CD8-positive, alpha-beta T cell (primary cell): ENCODE measurements at regions of chr14 and their contacts with region 1.

Region 1: DNA sequence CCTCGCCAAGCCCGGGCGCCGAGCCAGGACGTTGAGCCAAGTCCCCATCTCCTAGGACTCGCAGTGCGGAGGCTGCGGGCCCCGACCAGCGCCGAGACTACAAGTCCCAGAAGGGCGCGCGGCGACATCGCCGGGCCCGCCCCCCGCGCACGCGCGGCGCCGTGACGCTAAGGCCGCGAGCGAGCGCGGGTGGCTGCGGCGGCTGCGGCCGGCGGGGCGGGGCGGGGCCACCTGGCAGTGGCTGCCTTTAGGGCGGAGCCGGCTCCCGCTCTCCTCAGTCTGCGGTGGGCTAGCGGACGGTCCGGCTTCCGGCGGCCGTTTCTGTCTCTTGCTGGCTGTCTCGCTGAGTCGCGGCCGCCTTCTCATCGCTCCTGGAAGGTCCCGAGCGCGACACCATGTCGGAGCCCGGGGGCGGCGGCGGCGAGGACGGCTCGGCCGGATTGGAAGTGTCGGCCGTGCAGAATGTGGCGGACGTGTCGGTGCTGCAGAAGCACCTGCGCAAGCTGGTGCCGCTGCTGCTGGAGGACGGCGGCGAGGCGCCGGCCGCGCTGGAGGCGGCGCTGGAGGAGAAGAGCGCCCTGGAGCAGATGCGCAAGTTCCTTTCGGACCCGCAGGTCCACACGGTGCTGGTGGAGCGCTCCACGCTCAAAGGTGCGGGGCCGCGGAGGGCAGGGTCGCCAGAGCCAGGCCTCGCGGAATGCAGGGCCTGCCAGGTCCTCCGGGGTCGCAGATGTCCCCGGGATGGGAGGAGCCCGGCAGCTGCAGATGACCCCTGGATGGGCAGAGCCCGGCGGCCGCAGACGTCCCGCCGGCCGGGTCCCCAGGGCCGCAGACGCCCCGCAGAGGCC is at the start of gene DYNC1H1:
- DNase-seq: peak; percentile 75 to 94 (median 87)
- ATAC-seq: peak; percentile 84
- H3K4me3 ChIP-seq: peak within 1 kb of the TSS; percentile 87 to 92
- H3K4me3 Mint-ChIP-seq: peak within 1 kb of the TSS; percentile 90
- H3K27ac ChIP-seq: peak within 1 kb of the TSS; percentile 74 to 88
- H3K27ac Mint-ChIP-seq: peak within 1 kb of the TSS; percentile 91
- H3K4me1 ChIP-seq: peaks cover 31% of the 10 kb centered on the region
- H3K4me1 Mint-ChIP-seq: peaks cover 45% of the 10 kb centered on the region
- H3K27me3 ChIP-seq: no peaks in the 10 kb centered on the region
- H3K27me3 Mint-ChIP-seq: no peaks in the 10 kb centered on the region
- CTCF ChIP-seq: no peak
- total RNA-seq, gene DYNC1H1: 359 TPM

Region 2: GRCh38 chr14:101843665-101844064 is 120.9 kb before region 1 on chr14:
- CTCF ChIA-PET with region 1: no interaction called
- POLR2A ChIA-PET with region 1: no interaction called
- intact Hi-C with region 1: no loop called
- DNase-seq: peak in 8 of 9 experiments; percentile 24 to 89 (median 62)
- ATAC-seq: peak; percentile 70
- H3K4me3 ChIP-seq: no peak overlapping the region
- H3K4me3 Mint-ChIP-seq: peak overlapping the region; percentile 52
- H3K27ac ChIP-seq: peak overlapping the region in 1 of 2 experiments; percentile 21
- H3K27ac Mint-ChIP-seq: peak overlapping the region; percentile 90
- H3K4me1 ChIP-seq: peaks cover 67% of the 10 kb centered on the region
- H3K4me1 Mint-ChIP-seq: peaks cover 89% of the 10 kb centered on the region
- H3K27me3 ChIP-seq: no peaks in the 10 kb centered on the region
- H3K27me3 Mint-ChIP-seq: no peaks in the 10 kb centered on the region
- CTCF ChIP-seq: peak; percentile 72

Region 3: GRCh38 chr14:101947906-101948665 is 16.4 kb before region 1 on chr14:
- CTCF ChIA-PET with region 1: interaction called, 11 read pairs
- POLR2A ChIA-PET with region 1: interaction called, 5 read pairs
- intact Hi-C with region 1: loop called (anchors 1 kb)
- DNase-seq: peak; percentile 98 to 100 (median 99)
- ATAC-seq: peak; percentile 95
- H3K4me3 ChIP-seq: peak overlapping the region; percentile 81 to 82
- H3K4me3 Mint-ChIP-seq: peak overlapping the region; percentile 93
- H3K27ac ChIP-seq: peak overlapping the region; percentile 95 to 100
- H3K27ac Mint-ChIP-seq: peak overlapping the region; percentile 99
- H3K4me1 ChIP-seq: peaks cover 14% of the 10 kb centered on the region
- H3K4me1 Mint-ChIP-seq: peaks cover 20% of the 10 kb centered on the region
- H3K27me3 ChIP-seq: peaks cover 0 to 6% of the 10 kb centered on the region in 2 experiments
- H3K27me3 Mint-ChIP-seq: peaks cover 23% of the 10 kb centered on the region
- CTCF ChIP-seq: no peak

Region 4: GRCh38 chr14:102086972-102087761 is 122.6 kb after region 1 on chr14 and contains the start of gene HSP90AA1:
- CTCF ChIA-PET with region 1: interaction called, 16 read pairs
- POLR2A ChIA-PET with region 1: interaction called, 3 read pairs
- intact Hi-C with region 1: loop called (anchors 1 to 2 kb)
- DNase-seq: peak; percentile 88 to 98 (median 95)
- ATAC-seq: peak; percentile 74
- H3K4me3 ChIP-seq: peak within 1 kb of the TSS; percentile 75 to 78
- H3K4me3 Mint-ChIP-seq: peak within 1 kb of the TSS; percentile 97
- H3K27ac ChIP-seq: peak within 1 kb of the TSS; percentile 96 to 97
- H3K27ac Mint-ChIP-seq: peak within 1 kb of the TSS; percentile 99
- H3K4me1 ChIP-seq: peaks cover 49% of the 10 kb centered on the region
- H3K4me1 Mint-ChIP-seq: peaks cover 58% of the 10 kb centered on the region
- H3K27me3 ChIP-seq: no peaks in the 10 kb centered on the region
- H3K27me3 Mint-ChIP-seq: no peaks in the 10 kb centered on the region
- CTCF ChIP-seq: no peak
- total RNA-seq, gene HSP90AA1: 532 to 539 TPM

Region 5: DNA sequence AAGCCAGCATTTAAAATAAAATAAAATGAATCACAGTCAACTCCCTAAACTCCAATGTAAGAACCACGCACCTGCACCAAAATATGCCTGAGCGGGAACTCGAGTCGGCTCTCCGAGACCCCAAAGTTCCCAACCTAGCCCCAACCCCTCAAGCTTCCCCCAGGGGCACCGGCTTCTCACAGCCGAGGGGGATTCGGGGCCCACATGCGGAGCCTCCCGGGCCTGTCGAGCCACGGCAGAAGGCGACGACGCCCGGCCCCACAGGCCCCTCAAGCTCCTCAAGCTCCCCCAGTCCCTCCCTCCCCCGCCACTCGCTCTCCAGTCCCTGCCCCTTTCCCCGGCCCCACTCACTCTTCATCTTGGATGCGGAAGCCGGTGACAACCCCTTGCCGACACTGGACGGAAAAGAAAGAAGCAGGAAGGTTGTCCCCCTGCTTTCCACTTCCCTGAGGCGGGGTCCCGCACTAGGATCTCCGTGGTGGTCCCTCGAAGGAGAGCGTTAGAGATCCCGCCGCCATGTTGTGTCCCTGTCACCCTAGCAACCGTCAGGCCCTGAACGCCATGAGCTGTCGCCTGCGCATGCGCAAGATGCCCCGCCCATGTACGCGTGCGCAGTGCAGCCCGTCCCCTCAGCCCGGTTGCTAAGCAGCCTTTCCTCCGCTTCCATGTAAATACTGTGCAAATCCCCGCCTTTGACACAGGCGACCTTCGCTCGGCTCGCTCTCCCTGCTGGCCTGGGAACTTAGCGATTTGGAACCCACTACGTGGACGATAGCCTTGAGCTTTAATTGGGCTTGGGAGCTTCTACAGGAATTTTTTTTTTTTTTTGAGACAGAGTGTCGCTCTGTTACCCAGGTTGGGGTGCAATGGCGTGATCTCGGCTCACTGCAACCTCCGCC is 340.3 kb after region 1 on chr14 and contains the start of gene MOK:
- CTCF ChIA-PET with region 1: no interaction called
- POLR2A ChIA-PET with region 1: interaction called, 3 read pairs
- intact Hi-C with region 1: loop called in 1 of 2 experiments (anchors 1 kb)
- DNase-seq: peak; percentile 94 to 99 (median 98)
- ATAC-seq: peak; percentile 92
- H3K4me3 ChIP-seq: peak within 1 kb of the TSS; percentile 83 to 97
- H3K4me3 Mint-ChIP-seq: peak within 1 kb of the TSS; percentile 91
- H3K27ac ChIP-seq: peak within 1 kb of the TSS; percentile 84 to 88
- H3K27ac Mint-ChIP-seq: peak within 1 kb of the TSS; percentile 94
- H3K4me1 ChIP-seq: peaks cover 5% of the 10 kb centered on the region
- H3K4me1 Mint-ChIP-seq: peaks cover 10% of the 10 kb centered on the region
- H3K27me3 ChIP-seq: no peaks in the 10 kb centered on the region
- H3K27me3 Mint-ChIP-seq: peaks cover 2% of the 10 kb centered on the region
- CTCF ChIP-seq: no peak
- total RNA-seq, gene MOK: 2.7 to 3.6 TPM

Region 6: GRCh38 chr14:102362545-102363181 is 398.1 kb after region 1 on chr14 and contains the starts of genes CINP and TECPR2:
- CTCF ChIA-PET with region 1: no interaction called
- POLR2A ChIA-PET with region 1: no interaction called
- intact Hi-C with region 1: loop called in 1 of 2 experiments (anchors 5 kb)
- DNase-seq: peak; percentile 93 to 97 (median 96)
- ATAC-seq: peak; percentile 90
- H3K4me3 ChIP-seq: peak within 1 kb of the TSS; percentile 67 to 75
- H3K4me3 Mint-ChIP-seq: peak within 1 kb of the TSS; percentile 95
- H3K27ac ChIP-seq: peak within 1 kb of the TSS; percentile 82 to 86
- H3K27ac Mint-ChIP-seq: peak within 1 kb of the TSS; percentile 96
- H3K4me1 ChIP-seq: peaks cover 15% of the 10 kb centered on the region
- H3K4me1 Mint-ChIP-seq: peaks cover 24% of the 10 kb centered on the region
- H3K27me3 ChIP-seq: no peaks in the 10 kb centered on the region
- H3K27me3 Mint-ChIP-seq: no peaks in the 10 kb centered on the region
- CTCF ChIP-seq: no peak
- total RNA-seq, gene CINP: 15.9 to 19.2 TPM
- total RNA-seq, gene TECPR2: 3.4 to 5.8 TPM